ENCODE measurements at regions of chr10 and their contacts with region 1.

Region 1: GRCh38 chr10:65838834-65839233 is 1087.0 kb upstream of the LRRTM3 start:
- DNase-seq: no peak
- H3K4me3 ChIP-seq: no peak overlapping the region
- CTCF ChIP-seq: no peak
- POLR2A ChIP-seq: no peak

Region 2: DNA sequence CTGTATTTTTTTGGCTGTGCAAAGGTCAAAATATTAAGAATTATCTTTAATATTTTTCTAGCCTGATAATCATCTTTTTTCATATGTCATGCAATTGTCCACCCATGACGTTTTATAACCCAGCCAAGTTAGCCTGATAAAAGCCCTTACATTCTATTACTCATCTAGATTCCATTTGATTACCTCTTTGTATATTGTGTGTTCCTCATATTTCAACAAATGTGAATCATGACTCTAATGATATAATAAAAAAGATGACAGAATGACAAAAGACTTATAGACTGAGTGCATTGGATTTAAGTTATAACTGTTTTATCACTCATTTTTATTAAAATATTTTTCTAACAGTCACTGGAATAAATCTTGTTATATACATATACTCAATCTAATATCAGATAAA is 473.0 kb before region 1 on chr10:
- intact Hi-C with region 1: no loop called
- DNase-seq: no peak
- H3K4me3 ChIP-seq: no peak overlapping the region
- CTCF ChIP-seq: no peak
- POLR2A ChIP-seq: no peak

Region 3: GRCh38 chr10:66006411-66006810 is 167.6 kb after region 1 on chr10:
- intact Hi-C with region 1: loop called (anchors 10 kb)
- DNase-seq: no peak
- H3K4me3 ChIP-seq: no peak overlapping the region
- CTCF ChIP-seq: no peak
- POLR2A ChIP-seq: no peak

Measured in lower leg skin (tissue), 4 donors.